Right cardiac atrium (tissue), 5 donors: ENCODE measurements at regions of chr7 and their contacts with region 1.

Region 1: DNA sequence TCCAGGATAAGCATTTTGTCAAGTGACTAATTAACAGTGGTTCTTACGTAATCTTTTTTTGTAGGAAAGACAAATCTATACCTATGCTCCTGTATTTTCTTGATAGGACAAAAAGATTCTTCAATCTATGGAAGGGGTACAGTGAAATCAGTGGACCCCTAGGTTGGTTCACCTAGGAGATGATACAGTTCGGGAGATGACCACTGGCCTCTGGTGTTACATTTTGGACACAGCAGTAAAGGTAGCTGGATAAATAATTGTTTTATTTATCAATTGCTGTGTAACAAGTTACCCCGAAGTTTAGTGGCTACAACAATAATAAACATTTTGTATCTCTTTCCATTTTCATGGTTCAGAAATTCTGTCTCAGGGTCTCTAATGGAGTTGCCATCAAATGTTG is 288.2 kb upstream of the MAGI2 start:
- DNase-seq: no peak
- ATAC-seq: no peak
- H3K4me3 ChIP-seq: no peak overlapping the region
- H3K27ac ChIP-seq: no peak overlapping the region
- H3K4me1 ChIP-seq: no peaks in the 10 kb centered on the region
- H3K27me3 ChIP-seq: no peaks in the 10 kb centered on the region

Region 2: DNA sequence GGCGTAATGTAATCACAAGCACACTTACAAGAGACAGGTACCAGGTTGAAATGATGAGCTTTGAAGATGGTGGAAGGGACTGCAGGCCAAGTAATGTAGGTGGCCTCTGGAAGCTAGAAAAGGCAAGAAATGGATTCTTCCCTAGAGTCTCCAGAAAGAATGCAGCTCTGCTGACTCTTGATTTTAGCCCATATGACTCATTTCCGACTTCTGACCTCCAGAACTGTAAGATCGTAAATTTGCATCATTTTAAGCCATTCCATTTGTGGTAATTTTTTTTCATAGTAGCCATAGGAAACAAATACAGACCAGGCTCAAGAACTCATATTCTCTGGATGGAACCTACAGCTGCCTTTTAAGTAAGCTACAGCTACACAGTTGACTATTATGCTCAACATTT is 603.7 kb before region 1 on chr7:
- intact Hi-C with region 1: no loop called
- DNase-seq: no peak
- ATAC-seq: no peak
- H3K4me3 ChIP-seq: no peak overlapping the region
- H3K27ac ChIP-seq: no peak overlapping the region
- H3K4me1 ChIP-seq: peaks cover 2% of the 10 kb centered on the region
- H3K27me3 ChIP-seq: no peaks in the 10 kb centered on the region

Region 3: DNA sequence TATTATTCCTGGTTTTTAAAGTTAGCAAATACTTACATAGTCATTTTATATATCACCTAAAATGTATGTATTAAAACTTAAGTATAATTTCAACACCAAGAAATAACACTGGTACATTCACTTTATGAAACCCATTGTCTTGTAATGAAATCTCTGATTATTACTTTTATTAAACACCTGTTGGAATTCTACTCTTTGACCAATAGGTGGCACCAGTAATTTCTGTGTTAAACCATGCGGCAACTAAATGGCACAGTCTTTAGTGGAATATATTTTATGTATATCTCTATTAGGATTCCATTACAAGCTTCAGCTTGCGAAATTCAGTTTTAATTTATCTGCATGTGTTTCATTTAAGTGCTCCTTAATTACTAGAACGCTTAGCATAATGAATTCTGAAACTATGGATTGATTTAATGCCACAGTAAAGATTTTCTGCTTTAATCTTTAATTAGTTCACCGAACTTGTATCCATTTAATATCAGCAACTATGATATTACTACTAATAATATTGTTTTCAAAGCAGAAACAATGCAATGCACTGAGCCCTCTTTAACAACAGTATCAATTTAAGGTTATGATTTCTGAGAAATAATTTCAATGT is 469.5 kb before region 1 on chr7:
- intact Hi-C with region 1: no loop called
- DNase-seq: no peak
- ATAC-seq: no peak
- H3K4me3 ChIP-seq: no peak overlapping the region
- H3K27ac ChIP-seq: no peak overlapping the region
- H3K4me1 ChIP-seq: no peaks in the 10 kb centered on the region
- H3K27me3 ChIP-seq: no peaks in the 10 kb centered on the region

Region 4: DNA sequence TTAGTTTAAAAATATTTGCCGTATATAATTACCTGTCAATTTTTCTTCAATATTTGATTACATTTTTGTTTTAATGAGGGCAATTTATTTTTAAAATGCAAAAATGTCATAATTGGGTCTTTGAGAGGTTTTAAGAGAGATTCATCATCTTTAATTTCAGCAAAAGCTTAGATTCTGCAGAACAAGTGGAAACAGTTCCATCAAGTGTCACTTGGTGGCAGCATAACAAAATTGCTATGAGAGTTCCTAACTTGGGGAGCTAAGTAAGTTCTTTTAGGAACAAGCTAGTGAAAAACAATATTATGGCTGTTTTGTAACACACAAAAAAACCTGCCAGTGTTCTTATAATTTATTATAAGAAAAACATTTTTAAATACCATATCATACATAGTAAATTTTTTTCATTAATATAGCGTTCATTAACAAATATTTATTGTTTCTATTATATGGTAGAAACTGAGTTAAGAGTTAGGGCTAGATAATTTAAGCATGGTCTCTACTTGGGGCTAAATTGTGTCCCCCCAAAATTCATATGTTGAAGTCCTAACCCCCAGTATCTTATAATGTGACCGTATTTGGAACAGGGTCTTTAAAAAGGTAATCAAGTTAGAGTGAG is 443.4 kb before region 1 on chr7:
- intact Hi-C with region 1: loop called in 1 of 4 experiments (anchors 5 kb)
- DNase-seq: no peak
- ATAC-seq: no peak
- H3K4me3 ChIP-seq: no peak overlapping the region
- H3K27ac ChIP-seq: no peak overlapping the region
- H3K4me1 ChIP-seq: no peaks in the 10 kb centered on the region
- H3K27me3 ChIP-seq: no peaks in the 10 kb centered on the region